Activated CD4-positive, alpha-beta T cell treated with anti-CD3 and anti-CD28 coated beads for 36 hours (primary cell): ENCODE measurements at regions of chr20 and their contacts with region 1.

Region 1: DNA sequence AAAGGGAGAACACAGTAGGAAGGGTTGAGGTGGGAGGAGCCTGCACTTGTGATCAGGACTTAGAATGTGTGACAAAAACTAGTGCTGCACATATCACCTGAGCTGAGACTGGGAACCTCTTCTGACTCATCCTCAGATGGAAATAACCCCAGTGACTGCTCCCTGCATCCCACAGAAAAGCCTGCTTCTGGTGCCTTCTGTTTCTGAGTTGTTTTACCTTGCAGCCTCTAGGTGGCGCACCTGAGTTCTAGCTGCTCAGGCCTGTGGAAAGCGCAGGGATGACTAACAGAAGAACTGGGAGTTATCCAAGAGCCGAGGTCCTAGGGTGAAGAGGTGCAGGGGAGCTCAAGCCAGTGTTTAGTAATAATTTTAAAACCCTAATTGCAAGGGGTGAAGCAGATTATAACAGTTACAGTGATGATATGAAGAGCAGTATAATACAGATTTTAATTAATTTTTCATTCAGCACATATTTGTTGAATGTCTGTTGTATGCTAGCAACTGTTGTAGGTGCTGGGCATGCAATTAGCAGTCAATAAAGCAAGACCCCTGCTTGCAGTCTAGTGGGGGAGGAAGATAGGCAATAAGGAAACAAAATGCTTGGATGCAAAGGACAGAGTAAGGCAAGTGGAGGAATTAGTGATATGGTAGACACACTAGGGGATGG is 302.5 kb downstream of the DHX35 start:
- DNase-seq: peak; percentile 73
- ATAC-seq: peak; percentile 89
- H3K4me3 Mint-ChIP-seq: no peak overlapping the region
- H3K27ac Mint-ChIP-seq: no peak overlapping the region
- H3K4me1 Mint-ChIP-seq: peaks cover 2% of the 10 kb centered on the region
- H3K27me3 Mint-ChIP-seq: peaks cover 4% of the 10 kb centered on the region

Region 2: GRCh38 chr20:39278230-39278788 is 13.7 kb after region 1 on chr20:
- CTCF ChIA-PET with region 1: interaction called, 13 read pairs
- POLR2A ChIA-PET with region 1: no interaction called
- intact Hi-C with region 1: no loop called
- DNase-seq: no peak
- ATAC-seq: no peak
- H3K4me3 Mint-ChIP-seq: no peak overlapping the region
- H3K27ac Mint-ChIP-seq: no peak overlapping the region
- H3K4me1 Mint-ChIP-seq: no peaks in the 10 kb centered on the region
- H3K27me3 Mint-ChIP-seq: peaks cover 2% of the 10 kb centered on the region